ENCODE measurements at regions of chr12 and their contacts with region 1.

Region 1: GRCh38 chr12:63843721-63844390 is 644 bp upstream of the SRGAP1 start:
- DNase-seq: peak; percentile 95 to 97 (median 97)
- ATAC-seq: peak; percentile 96 to 97
- H3K4me3 ChIP-seq: peak overlapping the region; percentile 78
- H3K27ac ChIP-seq: peak overlapping the region; percentile 64
- H3K4me1 ChIP-seq: peaks cover 3% of the 10 kb centered on the region
- H3K27me3 ChIP-seq: no peaks in the 10 kb centered on the region

Region 2: GRCh38 chr12:63138488-63138887 is 705.4 kb before region 1 on chr12:
- intact Hi-C with region 1: no loop called
- DNase-seq: no peak
- ATAC-seq: no peak
- H3K4me3 ChIP-seq: no peak overlapping the region
- H3K27ac ChIP-seq: no peak overlapping the region
- H3K4me1 ChIP-seq: no peaks in the 10 kb centered on the region
- H3K27me3 ChIP-seq: no peaks in the 10 kb centered on the region

Region 3: DNA sequence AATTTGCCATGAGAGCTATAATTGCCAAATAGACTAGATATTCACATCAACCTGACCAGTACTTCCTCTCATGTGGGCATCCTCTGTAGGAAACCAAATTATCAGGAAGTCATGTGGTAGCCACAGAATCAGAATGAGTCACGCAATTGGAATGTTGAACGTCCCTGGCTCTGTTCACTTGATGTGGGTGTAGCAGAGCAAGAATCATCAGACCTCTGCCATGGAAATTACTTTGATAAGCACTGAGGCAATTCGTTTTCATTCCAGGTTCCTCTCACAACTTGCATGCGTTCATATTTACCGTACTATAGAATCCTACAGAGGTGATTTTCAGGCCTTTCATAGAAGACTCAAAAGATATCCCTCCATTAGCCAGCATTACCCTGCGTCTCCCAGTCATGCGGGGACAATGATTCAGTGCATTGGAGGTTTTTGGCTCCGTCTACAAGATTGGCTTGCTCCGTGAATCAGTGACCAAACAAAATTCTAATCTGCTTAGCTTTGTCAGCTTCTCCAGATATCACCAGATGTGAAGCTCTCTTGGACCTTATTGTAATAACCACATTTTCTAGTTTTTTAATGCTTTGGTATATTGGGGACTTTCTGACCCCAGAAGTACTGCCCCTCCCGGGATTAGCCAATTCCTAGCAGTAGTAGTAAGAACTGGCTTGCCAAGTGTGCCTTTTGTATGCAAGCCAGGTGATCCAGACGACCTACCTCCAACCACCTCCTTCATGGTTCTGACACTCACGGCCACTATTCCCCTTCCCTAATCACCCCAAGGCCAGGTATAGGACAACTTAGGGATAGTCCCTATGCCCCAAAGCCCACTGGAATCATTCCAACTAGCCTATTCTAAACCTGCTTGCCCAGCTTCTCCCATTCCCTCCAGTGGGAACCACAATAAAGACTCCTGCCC is 244.8 kb after region 1 on chr12:
- intact Hi-C with region 1: loop called in 3 of 4 experiments (anchors 10 kb)
- DNase-seq: peak in 2 of 3 donors; percentile 33 to 63
- ATAC-seq: peak; percentile 97 to 98
- H3K4me3 ChIP-seq: no peak overlapping the region
- H3K27ac ChIP-seq: peak overlapping the region; percentile 73
- H3K4me1 ChIP-seq: peaks cover 6% of the 10 kb centered on the region
- H3K27me3 ChIP-seq: no peaks in the 10 kb centered on the region

Region 4: GRCh38 chr12:64256166-64256800 is 412.4 kb after region 1 on chr12:
- intact Hi-C with region 1: loop called (anchors 2 to 5 kb)
- DNase-seq: no peak
- ATAC-seq: peak in 1 of 2 donors; percentile 38
- H3K4me3 ChIP-seq: no peak overlapping the region
- H3K27ac ChIP-seq: no peak overlapping the region
- H3K4me1 ChIP-seq: no peaks in the 10 kb centered on the region
- H3K27me3 ChIP-seq: no peaks in the 10 kb centered on the region

Measured in right cardiac atrium (tissue), 5 donors.